MCF 10A (cell line): ENCODE measurements at regions of chr22 and their contacts with region 1.

Region 1: DNA sequence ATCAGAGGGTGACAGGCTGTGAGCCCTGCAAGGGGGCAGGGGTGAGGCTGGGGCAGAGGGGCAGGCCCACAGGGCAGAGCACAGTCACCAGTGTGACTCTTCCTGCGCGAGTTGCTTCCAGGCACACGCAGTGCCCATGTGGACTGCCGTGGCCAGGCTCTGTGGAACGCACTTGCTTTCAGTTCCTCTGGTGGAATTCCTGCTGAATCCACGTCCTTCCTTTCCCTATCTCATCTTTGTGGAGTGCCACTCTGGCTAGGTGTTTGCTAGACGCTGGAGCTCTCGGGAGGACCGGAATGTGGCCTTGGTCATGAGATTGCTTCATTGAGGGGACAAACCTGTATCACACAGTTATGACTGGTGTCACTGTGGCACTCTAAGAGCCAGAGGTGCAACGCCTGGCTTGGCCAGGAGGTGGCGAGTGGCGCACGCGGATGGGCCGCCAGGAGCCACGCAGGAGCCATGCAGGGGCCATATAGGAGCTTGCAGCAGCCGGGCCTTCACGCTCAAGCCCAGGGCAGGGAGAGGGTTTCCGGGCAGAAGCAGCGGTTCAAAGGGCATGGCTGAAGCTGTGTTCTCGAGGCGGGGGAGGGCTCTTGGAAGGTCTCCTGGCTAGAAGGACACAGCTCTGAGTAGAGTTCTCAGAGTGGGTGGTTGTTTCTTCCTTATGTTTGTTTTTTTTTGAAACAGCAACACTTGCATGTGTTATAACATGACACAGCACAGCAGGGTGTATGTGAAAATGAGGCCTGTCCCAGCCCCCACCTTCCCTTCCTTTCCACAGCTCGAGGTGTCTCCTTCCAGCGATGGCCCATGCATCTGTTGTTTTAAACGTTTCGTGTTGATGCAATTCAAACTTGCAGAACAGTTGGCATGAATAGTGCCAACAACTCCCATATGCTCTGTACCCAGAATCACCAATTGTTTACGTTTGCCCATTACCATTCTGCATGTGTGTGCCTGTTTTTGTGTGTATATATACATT is 36.2 kb downstream of the TBC1D22A start:
- DNase-seq: peak; percentile 61
- H3K4me3 Mint-ChIP-seq: no peak overlapping the region
- H3K27ac Mint-ChIP-seq: peak overlapping the region; percentile 43
- H3K4me1 Mint-ChIP-seq: peaks cover 16% of the 10 kb centered on the region
- H3K27me3 Mint-ChIP-seq: no peaks in the 10 kb centered on the region
- CTCF ChIP-seq: peak; percentile 95

Region 2: DNA sequence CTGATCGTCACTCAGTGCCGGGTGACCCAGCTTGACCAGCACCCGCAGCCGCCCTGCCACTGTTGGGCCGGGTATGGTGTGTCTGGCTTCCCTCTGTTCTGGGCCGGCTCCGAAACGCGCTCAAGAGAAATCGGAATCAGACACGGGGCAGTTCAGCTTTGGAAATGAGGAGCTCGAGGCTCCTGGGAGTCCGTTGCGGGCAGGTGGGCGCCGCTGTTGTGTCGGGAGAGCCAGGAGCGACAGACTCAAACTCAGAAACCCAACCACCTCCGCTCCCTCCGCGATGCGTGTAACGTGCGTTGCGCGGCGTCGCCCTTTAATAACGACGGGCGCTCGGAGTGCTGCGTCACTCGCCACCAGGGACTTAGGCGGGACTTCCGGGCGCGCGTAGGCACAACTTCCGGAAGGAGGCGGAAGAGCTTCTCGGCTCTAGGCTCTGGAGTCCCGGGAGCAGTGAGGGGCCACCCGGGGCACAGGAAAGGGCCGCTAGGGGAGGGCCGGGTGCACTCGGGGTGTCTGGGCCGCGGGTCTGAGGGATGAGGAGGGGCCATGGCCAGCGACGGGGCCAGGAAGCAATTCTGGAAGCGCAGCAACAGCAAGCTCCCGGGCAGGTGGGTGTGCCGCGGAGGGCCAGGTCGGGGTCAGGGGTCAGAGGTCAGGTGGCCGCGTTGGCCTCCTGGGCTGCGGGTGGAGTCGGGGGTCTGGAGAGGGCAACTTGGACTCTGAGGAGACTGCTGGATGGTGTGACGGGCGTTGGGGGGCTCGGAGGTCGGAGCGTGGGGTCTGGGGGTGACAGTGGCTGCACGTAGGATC is 36.2 kb before region 1 on chr22 and contains the start of gene TBC1D22A:
- CTCF ChIA-PET with region 1: interaction called, 32 read pairs
- POLR2A ChIA-PET with region 1: interaction called, 8 read pairs
- intact Hi-C with region 1: loop called (anchors 2 kb)
- DNase-seq: peak; percentile 93
- H3K4me3 Mint-ChIP-seq: peak within 1 kb of the TSS; percentile 99
- H3K27ac Mint-ChIP-seq: peak within 1 kb of the TSS; percentile 100
- H3K4me1 Mint-ChIP-seq: peaks cover 29% of the 10 kb centered on the region
- H3K27me3 Mint-ChIP-seq: no peaks in the 10 kb centered on the region
- CTCF ChIP-seq: no peak
- total RNA-seq, gene TBC1D22A: 26.0 and 27.7 TPM in 2 replicates

Region 3: GRCh38 chr22:46774253-46774979 is 24.2 kb before region 1 on chr22:
- CTCF ChIA-PET with region 1: interaction called, 25 read pairs
- POLR2A ChIA-PET with region 1: interaction called, 3 read pairs
- intact Hi-C with region 1: no loop called
- DNase-seq: no peak
- H3K4me3 Mint-ChIP-seq: peak overlapping the region; percentile 59
- H3K27ac Mint-ChIP-seq: peak overlapping the region; percentile 85
- H3K4me1 Mint-ChIP-seq: peaks cover 34% of the 10 kb centered on the region
- H3K27me3 Mint-ChIP-seq: no peaks in the 10 kb centered on the region
- CTCF ChIP-seq: no peak

Region 4: GRCh38 chr22:46815896-46816731 is 17.5 kb after region 1 on chr22:
- CTCF ChIA-PET with region 1: interaction called, 78 read pairs
- POLR2A ChIA-PET with region 1: interaction called, 8 read pairs
- intact Hi-C with region 1: no loop called
- DNase-seq: peak; percentile 17
- H3K4me3 Mint-ChIP-seq: no peak overlapping the region
- H3K27ac Mint-ChIP-seq: peak overlapping the region; percentile 19
- H3K4me1 Mint-ChIP-seq: peaks cover 17% of the 10 kb centered on the region
- H3K27me3 Mint-ChIP-seq: no peaks in the 10 kb centered on the region
- CTCF ChIP-seq: no peak

Region 5: GRCh38 chr22:46845296-46846149 is 46.9 kb after region 1 on chr22:
- CTCF ChIA-PET with region 1: interaction called, 17 read pairs
- POLR2A ChIA-PET with region 1: interaction called, 3 read pairs
- intact Hi-C with region 1: no loop called
- DNase-seq: no peak
- H3K4me3 Mint-ChIP-seq: no peak overlapping the region
- H3K27ac Mint-ChIP-seq: no peak overlapping the region
- H3K4me1 Mint-ChIP-seq: peaks cover 53% of the 10 kb centered on the region
- H3K27me3 Mint-ChIP-seq: no peaks in the 10 kb centered on the region
- CTCF ChIP-seq: peak; percentile 14

Region 6: DNA sequence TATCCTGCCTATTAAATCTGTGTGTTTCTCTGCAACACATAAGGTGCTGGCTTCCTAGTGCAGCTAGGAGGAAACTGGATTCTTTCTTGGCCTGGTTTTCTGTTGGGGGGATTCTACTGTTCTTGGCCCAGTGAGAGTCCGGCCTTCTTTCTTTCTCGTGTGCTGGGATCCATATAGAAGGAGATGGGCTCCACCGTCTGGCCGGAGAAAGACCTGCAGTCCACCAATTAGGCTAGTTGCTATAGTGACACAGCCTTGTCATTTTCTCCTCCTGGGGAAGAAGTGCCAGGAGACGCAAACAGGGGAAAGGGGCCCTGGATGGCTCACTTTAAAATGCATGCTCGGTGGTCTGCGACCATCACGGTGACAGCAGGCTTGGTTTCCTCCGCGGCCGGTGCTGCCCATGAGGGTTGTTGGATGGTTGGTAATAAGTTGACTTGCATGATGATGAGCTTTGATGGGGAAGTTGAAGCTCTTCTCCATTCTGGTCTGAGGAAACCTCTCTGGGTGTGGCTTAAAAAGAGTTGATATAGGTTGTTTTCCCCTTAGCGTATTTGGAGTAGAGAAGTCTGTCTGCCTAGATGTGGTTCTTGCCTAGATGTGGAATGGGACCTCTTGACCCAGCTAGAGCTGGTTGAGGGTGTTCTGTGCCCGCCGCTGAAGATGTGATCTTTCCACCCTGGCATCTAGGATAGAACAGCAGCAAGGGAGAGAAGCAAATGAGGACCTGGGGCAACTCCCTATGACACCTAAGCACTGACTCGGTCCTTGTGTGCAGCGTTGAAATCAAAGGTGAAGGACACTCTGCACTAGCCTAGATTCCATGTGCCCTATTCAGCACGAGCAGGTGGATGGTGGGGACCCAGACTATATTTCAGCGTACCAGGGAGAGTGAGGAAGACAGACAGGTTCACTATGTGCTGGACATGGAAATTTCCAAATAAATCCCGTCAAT is 1694.0 kb after region 1 on chr22:
- CTCF ChIA-PET with region 1: interaction called, 18 read pairs
- POLR2A ChIA-PET with region 1: no interaction called
- intact Hi-C with region 1: no loop called
- DNase-seq: peak; percentile 21
- H3K4me3 Mint-ChIP-seq: no peak overlapping the region
- H3K27ac Mint-ChIP-seq: no peak overlapping the region
- H3K4me1 Mint-ChIP-seq: no peaks in the 10 kb centered on the region
- H3K27me3 Mint-ChIP-seq: no peaks in the 10 kb centered on the region
- CTCF ChIP-seq: peak; percentile 55